Caco-2 (cell line): ENCODE measurements at regions of chr15 and their contacts with region 1.

Region 1: DNA sequence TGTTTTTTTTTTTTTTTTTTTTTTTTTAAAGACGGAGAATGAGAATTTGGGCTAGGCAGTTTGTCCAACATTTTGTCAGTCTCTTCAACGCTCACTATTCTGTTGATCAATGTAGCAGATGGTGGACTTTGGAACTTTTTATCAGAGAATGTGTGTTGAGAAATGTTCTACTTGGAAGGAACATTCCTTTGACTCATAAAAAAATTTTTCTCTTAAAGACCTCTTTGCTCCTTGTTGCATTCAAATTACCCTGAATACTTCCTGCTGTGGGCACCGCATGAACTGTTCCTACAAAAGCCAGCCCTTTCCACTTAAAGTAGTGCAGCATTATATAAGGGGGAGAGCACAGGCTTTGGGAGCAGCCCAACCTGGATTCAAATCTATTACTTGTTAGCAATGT is 182.9 kb downstream of the AKAP13 start:
- DNase-seq: peak; percentile 71 to 79
- H3K4me3 ChIP-seq: no peak overlapping the region
- H3K4me3 Mint-ChIP-seq: peak overlapping the region; percentile 21
- H3K27ac Mint-ChIP-seq: peak overlapping the region; percentile 65
- H3K4me1 ChIP-seq: peaks cover 44% of the 10 kb centered on the region
- H3K4me1 Mint-ChIP-seq: peaks cover 23% of the 10 kb centered on the region
- H3K27me3 ChIP-seq: no peaks in the 10 kb centered on the region
- H3K27me3 Mint-ChIP-seq: no peaks in the 10 kb centered on the region
- CTCF ChIP-seq: no peak

Region 2: GRCh38 chr15:85443593-85444087 is 119.7 kb before region 1 on chr15:
- CTCF ChIA-PET with region 1: no interaction called
- POLR2A ChIA-PET with region 1: no interaction called
- intact Hi-C with region 1: loop called (anchors 1 kb)
- DNase-seq: peak; percentile 68 to 77
- H3K4me3 ChIP-seq: no peak overlapping the region
- H3K4me3 Mint-ChIP-seq: peak overlapping the region; percentile 32
- H3K27ac Mint-ChIP-seq: peak overlapping the region; percentile 88
- H3K4me1 ChIP-seq: peaks cover 28% of the 10 kb centered on the region
- H3K4me1 Mint-ChIP-seq: peaks cover 36% of the 10 kb centered on the region
- H3K27me3 ChIP-seq: no peaks in the 10 kb centered on the region
- H3K27me3 Mint-ChIP-seq: no peaks in the 10 kb centered on the region
- CTCF ChIP-seq: peak in 1 of 2 experiments; percentile 47

Region 3: DNA sequence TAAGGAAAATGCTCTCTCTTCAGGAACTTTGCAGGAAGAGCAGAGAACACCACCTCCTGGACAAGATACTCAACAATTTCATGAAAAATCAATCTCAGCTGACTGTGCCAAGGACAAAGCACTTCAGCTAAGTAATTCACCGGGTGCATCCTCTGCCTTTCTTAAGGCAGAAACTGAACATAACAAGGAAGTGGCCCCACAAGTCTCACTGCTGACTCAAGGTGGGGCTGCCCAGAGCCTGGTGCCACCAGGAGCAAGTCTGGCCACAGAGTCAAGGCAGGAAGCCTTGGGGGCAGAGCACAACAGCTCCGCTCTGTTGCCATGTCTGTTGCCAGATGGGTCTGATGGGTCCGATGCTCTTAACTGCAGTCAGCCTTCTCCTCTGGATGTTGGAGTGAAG is 17.6 kb after region 1 on chr15:
- CTCF ChIA-PET with region 1: interaction called, 4 read pairs
- POLR2A ChIA-PET with region 1: no interaction called
- intact Hi-C with region 1: loop called (anchors 1 kb)
- DNase-seq: no peak
- H3K4me3 ChIP-seq: no peak overlapping the region
- H3K4me3 Mint-ChIP-seq: no peak overlapping the region
- H3K27ac Mint-ChIP-seq: no peak overlapping the region
- H3K4me1 ChIP-seq: peaks cover 21% of the 10 kb centered on the region
- H3K4me1 Mint-ChIP-seq: peaks cover 15% of the 10 kb centered on the region
- H3K27me3 ChIP-seq: no peaks in the 10 kb centered on the region
- H3K27me3 Mint-ChIP-seq: no peaks in the 10 kb centered on the region
- CTCF ChIP-seq: no peak

Region 4: GRCh38 chr15:85707519-85708338 is 144.4 kb after region 1 on chr15:
- CTCF ChIA-PET with region 1: no interaction called
- POLR2A ChIA-PET with region 1: no interaction called
- intact Hi-C with region 1: loop called (anchors 5 kb)
- DNase-seq: peak; percentile 65 to 71
- H3K4me3 ChIP-seq: no peak overlapping the region
- H3K4me3 Mint-ChIP-seq: peak overlapping the region; percentile 66
- H3K27ac Mint-ChIP-seq: peak overlapping the region; percentile 77
- H3K4me1 ChIP-seq: peaks cover 32% of the 10 kb centered on the region
- H3K4me1 Mint-ChIP-seq: peaks cover 35% of the 10 kb centered on the region
- H3K27me3 ChIP-seq: no peaks in the 10 kb centered on the region
- H3K27me3 Mint-ChIP-seq: no peaks in the 10 kb centered on the region
- CTCF ChIP-seq: no peak